Activated B cell treated with CpG ODN at 0.5 μM for 24 hours (primary cell): ENCODE measurements at regions of chr5 and their contacts with region 1.

Region 1: GRCh38 chr5:1467768-1468534 is 22.7 kb upstream of the SLC6A3 start:
- DNase-seq: no peak
- ATAC-seq: no peak
- H3K4me3 Mint-ChIP-seq: no peak overlapping the region
- H3K27ac Mint-ChIP-seq: peak overlapping the region; percentile 18
- H3K4me1 Mint-ChIP-seq: peaks cover 15% of the 10 kb centered on the region
- H3K27me3 Mint-ChIP-seq: no peaks in the 10 kb centered on the region
- CTCF ChIP-seq: no peak

Region 2: DNA sequence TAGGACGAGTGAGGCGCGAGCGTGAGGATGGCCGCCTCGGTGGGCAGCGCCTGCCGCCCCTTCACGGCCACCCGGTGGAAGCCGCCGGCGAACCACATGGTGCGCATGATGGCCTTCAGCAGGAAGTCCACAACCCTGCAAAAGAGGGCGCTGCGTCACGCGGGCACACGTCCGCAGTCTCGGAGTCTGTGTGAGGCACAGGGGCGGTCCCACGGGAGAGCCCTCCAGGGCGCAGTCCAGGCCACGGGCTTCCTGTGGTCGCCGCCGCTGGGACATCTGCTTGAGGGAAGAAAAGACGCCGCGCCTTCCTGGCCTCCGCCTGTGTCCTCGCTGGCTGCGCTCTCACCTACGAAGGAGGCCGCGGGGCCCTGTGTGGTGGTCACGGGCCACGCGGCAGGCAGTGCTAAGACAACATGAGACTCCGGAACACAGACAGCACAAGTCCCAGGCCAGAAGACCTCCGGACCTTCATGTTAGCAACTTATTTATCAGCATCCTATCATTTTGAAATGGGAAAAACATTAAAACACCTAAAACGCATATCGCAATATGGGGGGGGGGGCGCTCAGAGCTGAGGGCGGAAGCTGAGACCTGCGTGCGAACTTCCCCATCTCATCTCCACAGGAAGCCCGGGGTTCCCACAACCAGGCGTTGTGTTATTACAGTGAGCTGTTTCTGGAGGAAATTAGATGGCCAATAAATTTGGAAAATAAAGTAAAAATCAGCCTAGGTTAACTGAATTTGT is 27.0 kb after region 1 on chr5:
- CTCF ChIA-PET with region 1: no interaction called
- POLR2A ChIA-PET with region 1: interaction called, 10 read pairs
- intact Hi-C with region 1: no loop called
- DNase-seq: peak; percentile 78
- ATAC-seq: peak; percentile 59
- H3K4me3 Mint-ChIP-seq: peak overlapping the region; percentile 84
- H3K27ac Mint-ChIP-seq: peak overlapping the region; percentile 83
- H3K4me1 Mint-ChIP-seq: peaks cover 100% of the 10 kb centered on the region
- H3K27me3 Mint-ChIP-seq: no peaks in the 10 kb centered on the region
- CTCF ChIP-seq: no peak

Region 3: GRCh38 chr5:1709171-1709803 is 241.3 kb after region 1 on chr5:
- CTCF ChIA-PET with region 1: no interaction called
- POLR2A ChIA-PET with region 1: no interaction called
- intact Hi-C with region 1: no loop called
- DNase-seq: no peak
- ATAC-seq: no peak
- H3K4me3 Mint-ChIP-seq: no peak overlapping the region
- H3K27ac Mint-ChIP-seq: no peak overlapping the region
- H3K4me1 Mint-ChIP-seq: peaks cover 3% of the 10 kb centered on the region
- H3K27me3 Mint-ChIP-seq: peaks cover 41% of the 10 kb centered on the region
- CTCF ChIP-seq: no peak